Activated B cell treated with CpG ODN at 0.5 μM for 24 hours (primary cell): ENCODE measurements at regions of chr19 and their contacts with region 1.

Region 1: GRCh38 chr19:17755977-17756670 is 4.8 kb downstream of the FCHO1 start:
- DNase-seq: peak; percentile 61
- ATAC-seq: no peak
- H3K4me3 Mint-ChIP-seq: peak overlapping the region; percentile 46
- H3K27ac Mint-ChIP-seq: peak overlapping the region; percentile 90
- H3K4me1 Mint-ChIP-seq: peaks cover 84% of the 10 kb centered on the region
- H3K27me3 Mint-ChIP-seq: no peaks in the 10 kb centered on the region
- CTCF ChIP-seq: no peak

Region 2: GRCh38 chr19:17703824-17704463 is 52.2 kb before region 1 on chr19:
- CTCF ChIA-PET with region 1: interaction called, 19 read pairs
- POLR2A ChIA-PET with region 1: interaction called, 3 read pairs
- intact Hi-C with region 1: no loop called
- DNase-seq: peak; percentile 70
- ATAC-seq: peak; percentile 97
- H3K4me3 Mint-ChIP-seq: no peak overlapping the region
- H3K27ac Mint-ChIP-seq: no peak overlapping the region
- H3K4me1 Mint-ChIP-seq: peaks cover 2% of the 10 kb centered on the region
- H3K27me3 Mint-ChIP-seq: peaks cover 8% of the 10 kb centered on the region
- CTCF ChIP-seq: peak; percentile 64

Region 3: GRCh38 chr19:17725422-17726078 is 30.6 kb before region 1 on chr19:
- CTCF ChIA-PET with region 1: interaction called, 21 read pairs
- POLR2A ChIA-PET with region 1: interaction called, 29 read pairs
- intact Hi-C with region 1: no loop called
- DNase-seq: no peak
- ATAC-seq: peak; percentile 54
- H3K4me3 Mint-ChIP-seq: no peak overlapping the region
- H3K27ac Mint-ChIP-seq: no peak overlapping the region
- H3K4me1 Mint-ChIP-seq: peaks cover 26% of the 10 kb centered on the region
- H3K27me3 Mint-ChIP-seq: no peaks in the 10 kb centered on the region
- CTCF ChIP-seq: no peak

Region 4: DNA sequence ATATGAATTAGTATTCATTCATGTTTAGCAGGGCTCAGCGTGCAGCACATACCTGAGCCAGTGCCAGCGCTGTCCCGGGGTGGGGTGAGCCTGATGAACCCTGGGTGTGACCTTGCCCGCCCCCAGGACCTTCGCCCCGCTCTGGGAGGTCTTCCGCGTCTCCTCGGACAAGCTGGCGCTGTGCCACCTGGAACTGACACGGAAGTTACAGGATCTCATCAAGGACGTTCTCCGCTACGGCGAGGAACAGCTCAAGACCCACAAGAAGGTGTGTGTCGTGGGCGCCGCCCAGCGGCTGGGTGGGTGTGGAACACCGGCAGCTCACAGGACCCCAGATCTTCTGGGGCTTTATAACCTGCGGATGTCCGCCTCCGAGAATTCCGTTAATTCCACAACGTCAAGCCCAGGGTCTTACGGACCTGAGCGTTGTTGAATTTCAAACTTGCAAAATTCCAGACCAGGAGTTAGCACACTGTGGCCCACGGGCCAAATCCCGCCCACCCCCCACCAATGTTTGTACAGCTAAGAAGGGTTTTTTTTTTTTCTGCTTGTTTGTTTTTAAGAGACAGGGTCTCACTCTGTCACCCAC is 10.5 kb after region 1 on chr19:
- CTCF ChIA-PET with region 1: interaction called, 50 read pairs
- POLR2A ChIA-PET with region 1: interaction called, 16 read pairs
- intact Hi-C with region 1: loop called (anchors 1 kb)
- DNase-seq: peak; percentile 57
- ATAC-seq: peak; percentile 77
- H3K4me3 Mint-ChIP-seq: no peak overlapping the region
- H3K27ac Mint-ChIP-seq: no peak overlapping the region
- H3K4me1 Mint-ChIP-seq: peaks cover 23% of the 10 kb centered on the region
- H3K27me3 Mint-ChIP-seq: no peaks in the 10 kb centered on the region
- CTCF ChIP-seq: no peak

Region 5: DNA sequence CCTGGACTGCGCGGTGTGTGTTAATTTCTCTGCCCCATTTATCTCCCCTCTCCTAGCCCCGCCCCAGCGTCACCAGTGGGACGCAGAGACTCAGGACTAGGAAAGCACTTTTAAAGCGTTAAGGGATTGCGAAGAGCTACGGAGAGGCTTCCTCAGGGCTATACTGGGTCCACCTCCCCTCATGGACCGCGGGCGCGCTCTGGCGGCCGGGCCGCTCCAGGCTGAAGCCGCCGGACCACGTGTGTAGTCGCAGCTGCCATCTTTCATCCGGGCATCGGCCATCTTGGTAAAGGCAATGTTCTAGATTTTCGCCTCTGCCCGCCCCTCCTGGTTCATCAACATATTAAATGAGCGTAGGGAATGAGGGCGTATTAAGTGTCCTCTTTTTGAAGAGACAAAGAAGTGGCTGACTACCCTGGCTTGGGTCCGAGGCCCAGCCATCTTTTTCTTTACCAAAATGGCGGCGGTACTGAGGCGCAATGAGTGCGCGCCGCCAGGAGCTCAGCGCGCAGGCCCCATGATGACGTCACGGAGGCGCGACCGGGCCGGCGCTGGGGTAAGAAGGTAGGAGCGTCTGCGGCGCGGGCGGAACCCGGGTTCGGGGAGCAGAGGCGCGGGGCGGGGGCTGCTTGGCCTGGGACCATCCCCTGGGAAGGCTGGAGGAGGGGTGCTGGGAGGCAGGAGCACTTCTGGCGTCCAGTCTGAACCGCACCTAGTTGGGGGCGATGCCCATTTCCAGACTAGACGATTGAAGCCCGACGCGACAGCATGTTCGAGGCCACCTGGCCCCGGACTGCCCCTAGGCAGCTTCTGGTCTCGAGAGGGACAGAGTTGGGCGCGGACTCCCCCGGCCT is 176.6 kb after region 1 on chr19 and contains the start of gene CCDC124:
- CTCF ChIA-PET with region 1: interaction called, 10 read pairs
- POLR2A ChIA-PET with region 1: interaction called, 9 read pairs
- intact Hi-C with region 1: no loop called
- DNase-seq: peak; percentile 87
- ATAC-seq: peak; percentile 96
- H3K4me3 Mint-ChIP-seq: peak within 1 kb of the TSS; percentile 88
- H3K27ac Mint-ChIP-seq: peak within 1 kb of the TSS; percentile 94
- H3K4me1 Mint-ChIP-seq: peaks cover 25% of the 10 kb centered on the region
- H3K27me3 Mint-ChIP-seq: no peaks in the 10 kb centered on the region
- CTCF ChIP-seq: no peak
- total RNA-seq, gene CCDC124: 49.9 and 59.5 TPM in 2 replicates

Region 6: DNA sequence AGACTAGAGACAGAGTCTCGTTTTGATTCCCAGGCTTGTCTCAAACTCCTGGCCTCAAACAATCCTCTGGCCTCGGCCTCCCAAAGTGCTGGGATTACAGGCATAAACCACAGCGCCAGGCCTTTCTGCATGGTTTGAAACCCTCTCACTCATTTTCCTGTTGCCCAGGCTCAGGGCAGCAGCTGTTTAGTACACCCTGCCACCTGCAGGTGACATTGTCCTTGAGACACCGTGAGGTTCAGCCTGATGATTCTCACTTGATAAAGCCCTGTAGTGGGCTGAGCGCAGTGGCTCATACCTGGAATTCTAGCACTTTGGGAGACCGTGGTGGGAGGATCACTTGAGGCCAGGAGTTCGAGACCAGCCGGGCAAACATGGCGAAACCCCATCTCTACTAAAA is 318.1 kb after region 1 on chr19:
- CTCF ChIA-PET with region 1: no interaction called
- POLR2A ChIA-PET with region 1: no interaction called
- intact Hi-C with region 1: no loop called
- DNase-seq: no peak
- ATAC-seq: no peak
- H3K4me3 Mint-ChIP-seq: no peak overlapping the region
- H3K27ac Mint-ChIP-seq: no peak overlapping the region
- H3K4me1 Mint-ChIP-seq: no peaks in the 10 kb centered on the region
- H3K27me3 Mint-ChIP-seq: no peaks in the 10 kb centered on the region
- CTCF ChIP-seq: no peak